ENCODE measurements at regions of chr1 and their contacts with region 1.

Region 1: GRCh38 chr1:221741711-221742554 is at the start of gene DUSP10:
- DNase-seq: peak; percentile 99
- ATAC-seq: peak; percentile 95
- total RNA-seq, gene DUSP10: 3.2 TPM

Region 2: DNA sequence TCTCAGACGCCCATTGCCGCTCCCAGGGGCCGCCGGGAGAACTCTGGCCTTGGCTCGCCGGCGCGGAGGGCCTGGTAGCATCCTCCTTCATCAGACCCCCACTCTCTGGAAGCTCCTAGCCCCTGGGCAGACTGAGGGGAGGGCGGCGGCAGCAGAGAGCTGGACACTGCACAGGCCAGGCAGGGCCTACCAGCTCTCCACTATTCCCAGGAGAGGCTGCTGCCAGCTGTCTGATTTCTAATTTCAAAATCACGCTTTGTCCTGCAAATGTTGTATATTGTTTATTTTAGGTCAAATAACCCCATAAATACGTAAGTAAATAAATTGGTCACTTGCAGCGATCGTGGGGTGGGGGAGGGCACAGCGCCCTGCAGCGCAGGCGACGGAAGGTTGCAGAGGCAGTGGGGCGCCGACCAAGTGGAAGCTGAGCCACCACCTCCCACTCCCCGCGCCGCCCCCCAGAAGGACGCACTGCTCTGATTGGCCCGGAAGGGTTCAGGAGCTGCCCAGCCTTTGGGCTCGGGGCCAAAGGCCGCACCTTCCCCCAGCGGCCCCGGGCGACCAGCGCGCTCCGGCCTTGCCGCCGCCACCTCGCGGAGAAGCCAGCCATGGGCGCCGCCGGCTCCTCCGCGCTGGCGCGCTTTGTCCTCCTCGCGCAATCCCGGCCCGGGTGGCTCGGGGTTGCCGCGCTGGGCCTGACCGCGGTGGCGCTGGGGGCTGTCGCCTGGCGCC is 955.4 kb before region 1 on chr1 and contains the start of gene MTARC1:
- intact Hi-C with region 1: loop called (anchors 10 kb)
- DNase-seq: peak; percentile 89
- ATAC-seq: peak; percentile 88
- total RNA-seq, gene MTARC1: 7.9 TPM

Region 3: DNA sequence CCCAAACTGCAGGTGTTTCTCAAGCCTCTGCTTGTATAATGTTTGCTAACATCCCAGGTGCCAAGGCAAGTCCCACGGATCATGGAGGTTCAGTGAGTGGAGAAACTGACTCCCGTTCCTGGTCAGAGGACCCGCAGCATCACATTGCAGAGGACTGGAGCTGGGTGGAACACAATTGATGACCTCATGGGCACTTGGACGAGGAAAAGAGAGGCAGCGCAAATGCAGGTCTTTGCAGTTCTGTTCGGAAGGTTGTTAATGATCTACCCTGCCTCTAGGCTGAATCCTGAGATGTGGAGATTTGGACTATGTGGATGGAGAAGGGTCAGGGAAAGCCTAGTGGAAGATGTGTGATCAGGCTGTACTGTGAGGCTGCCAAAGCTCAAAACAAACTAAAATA is 193.0 kb before region 1 on chr1:
- intact Hi-C with region 1: loop called (anchors 5 kb)
- DNase-seq: no peak
- ATAC-seq: no peak

Region 4: GRCh38 chr1:221777431-221778072 is 35.6 kb after region 1 on chr1:
- intact Hi-C with region 1: no loop called
- DNase-seq: no peak
- ATAC-seq: no peak

Region 5: GRCh38 chr1:221839796-221840395 is 98.0 kb after region 1 on chr1:
- intact Hi-C with region 1: loop called (anchors 10 kb)
- DNase-seq: peak; percentile 81
- ATAC-seq: peak; percentile 73

Region 6: DNA sequence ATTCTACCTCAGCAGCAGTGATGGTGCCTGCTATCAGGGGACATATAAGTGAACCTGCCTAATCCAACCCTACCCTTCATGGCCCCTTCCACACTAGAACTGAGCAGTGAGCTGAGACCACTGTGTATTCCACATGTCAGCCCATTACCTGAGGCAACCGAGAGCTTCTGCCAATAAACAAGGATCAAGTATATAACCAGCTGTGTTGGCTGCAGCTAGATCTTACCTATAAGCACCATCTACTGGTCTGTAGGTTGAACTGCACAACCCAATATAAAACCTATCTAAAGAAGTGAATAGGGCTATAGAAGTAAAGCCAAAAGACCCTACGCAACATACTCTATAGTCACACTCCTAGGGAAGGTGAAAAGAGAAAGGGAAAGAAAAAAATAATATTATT is 429.1 kb after region 1 on chr1:
- intact Hi-C with region 1: loop called (anchors 2 kb)
- DNase-seq: no peak
- ATAC-seq: no peak